GM13976 (cell line): ENCODE measurements at regions of chr3 and their contacts with region 1.

Region 1: GRCh38 chr3:122679085-122679881 is 1.4 kb upstream of the PARP14 start:
- DNase-seq: peak; percentile 55
- CTCF ChIP-seq: peak; percentile 81

Region 2: GRCh38 chr3:122392868-122393844 is 286.1 kb before region 1 on chr3:
- in situ Hi-C with region 1: loop called (anchors 10 kb)
- DNase-seq: peak; percentile 30
- CTCF ChIP-seq: peak; percentile 61

Region 3: DNA sequence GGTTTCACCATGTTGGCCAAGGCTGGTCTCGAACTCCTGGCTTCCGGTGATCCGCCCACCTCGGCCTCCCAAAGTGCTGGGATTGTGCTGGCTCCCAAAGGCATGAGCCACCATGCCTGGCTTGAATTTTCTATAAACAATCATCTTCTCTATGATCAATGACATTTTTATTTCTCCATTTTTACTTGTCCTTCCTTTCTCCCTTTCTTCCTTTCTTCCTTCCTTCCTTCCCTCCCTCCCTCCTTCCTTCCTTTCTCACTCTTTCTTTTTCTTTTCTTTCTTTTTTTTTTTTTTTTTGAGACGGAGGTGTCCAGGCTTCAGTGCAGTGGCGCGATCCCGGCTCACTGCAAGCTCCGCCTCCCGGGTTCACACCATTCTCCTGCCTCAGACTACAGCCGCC is 156.0 kb before region 1 on chr3:
- in situ Hi-C with region 1: no loop called
- DNase-seq: no peak
- CTCF ChIP-seq: no peak

Region 4: GRCh38 chr3:122555275-122556071 is 123.8 kb before region 1 on chr3:
- in situ Hi-C with region 1: loop called (anchors 5 kb)
- DNase-seq: no peak
- CTCF ChIP-seq: no peak

Region 5: GRCh38 chr3:122568755-122569154 is 110.5 kb before region 1 on chr3:
- in situ Hi-C with region 1: no loop called
- DNase-seq: no peak
- CTCF ChIP-seq: no peak